T-cell (primary cell): ENCODE measurements at regions of chr11 and their contacts with region 1.

Region 1: GRCh38 chr11:105081412-105082087 is 36.4 kb upstream of the CARD16 start:
- DNase-seq: no peak
- ATAC-seq: no peak
- H3K4me3 ChIP-seq: no peak overlapping the region
- H3K4me3 Mint-ChIP-seq: no peak overlapping the region
- H3K27ac ChIP-seq: no peak overlapping the region
- H3K27ac Mint-ChIP-seq: no peak overlapping the region
- H3K4me1 ChIP-seq: no peaks in the 10 kb centered on the region
- H3K4me1 Mint-ChIP-seq: peaks cover 8 to 18% (median 18%) of the 10 kb centered on the region in 3 donors
- H3K27me3 ChIP-seq: peaks cover 0 to 7% of the 10 kb centered on the region in 2 experiments
- H3K27me3 Mint-ChIP-seq: peaks cover 3 to 17% of the 10 kb centered on the region in 2 donors

Region 2: GRCh38 chr11:103662880-103663279 is 1418.7 kb before region 1 on chr11:
- CTCF ChIA-PET with region 1: no interaction called
- POLR2A ChIA-PET with region 1: interaction called in 1 of 2 experiments, 11 read pairs
- DNase-seq: no peak
- ATAC-seq: peak in 2 of 4 experiments; percentile 11 to 42
- H3K4me3 ChIP-seq: no peak overlapping the region
- H3K4me3 Mint-ChIP-seq: no peak overlapping the region
- H3K27ac ChIP-seq: no peak overlapping the region
- H3K27ac Mint-ChIP-seq: no peak overlapping the region
- H3K4me1 ChIP-seq: no peaks in the 10 kb centered on the region
- H3K4me1 Mint-ChIP-seq: peaks cover 7 to 12% (median 10%) of the 10 kb centered on the region in 3 donors
- H3K27me3 ChIP-seq: no peaks in the 10 kb centered on the region
- H3K27me3 Mint-ChIP-seq: no peaks in the 10 kb centered on the region